Mammary epithelial cell (primary cell): ENCODE measurements at regions of chr20 and their contacts with region 1.

Region 1: GRCh38 chr20:6265204-6265904 is 142.5 kb upstream of the FERMT1 start:
- DNase-seq: peak; percentile 41
- H3K4me3 ChIP-seq: peak overlapping the region in 2 of 3 experiments; percentile 17 to 35
- H3K27ac ChIP-seq: peak overlapping the region; percentile 10
- H3K4me1 ChIP-seq: peaks cover 9% of the 10 kb centered on the region
- H3K27me3 ChIP-seq: no peaks in the 10 kb centered on the region
- CTCF ChIP-seq: peak; percentile 65 to 70

Region 2: GRCh38 chr20:6142348-6142993 is 122.9 kb before region 1 on chr20:
- CTCF ChIA-PET with region 1: no interaction called
- dilution Hi-C with region 1: no loop called
- in situ Hi-C with region 1: no loop called
- intact Hi-C with region 1: loop called (anchors 10 kb)
- DNase-seq: peak; percentile 36
- H3K4me3 ChIP-seq: no peak overlapping the region
- H3K27ac ChIP-seq: no peak overlapping the region
- H3K4me1 ChIP-seq: no peaks in the 10 kb centered on the region
- H3K27me3 ChIP-seq: no peaks in the 10 kb centered on the region
- CTCF ChIP-seq: peak; percentile 76 to 88

Region 3: GRCh38 chr20:6238421-6238820 is 26.9 kb before region 1 on chr20:
- CTCF ChIA-PET with region 1: no interaction called
- dilution Hi-C with region 1: no loop called
- in situ Hi-C with region 1: no loop called
- intact Hi-C with region 1: no loop called
- DNase-seq: no peak
- H3K4me3 ChIP-seq: no peak overlapping the region
- H3K27ac ChIP-seq: no peak overlapping the region
- H3K4me1 ChIP-seq: no peaks in the 10 kb centered on the region
- H3K27me3 ChIP-seq: no peaks in the 10 kb centered on the region
- CTCF ChIP-seq: no peak

Region 4: GRCh38 chr20:6295127-6295866 is 29.9 kb after region 1 on chr20:
- CTCF ChIA-PET with region 1: no interaction called
- dilution Hi-C with region 1: no loop called
- in situ Hi-C with region 1: no loop called
- intact Hi-C with region 1: no loop called
- DNase-seq: no peak
- H3K4me3 ChIP-seq: no peak overlapping the region
- H3K27ac ChIP-seq: no peak overlapping the region
- H3K4me1 ChIP-seq: peaks cover 11% of the 10 kb centered on the region
- H3K27me3 ChIP-seq: no peaks in the 10 kb centered on the region
- CTCF ChIP-seq: no peak

Region 5: GRCh38 chr20:6381887-6382286 is 116.5 kb after region 1 on chr20:
- CTCF ChIA-PET with region 1: no interaction called
- dilution Hi-C with region 1: no loop called
- in situ Hi-C with region 1: no loop called
- intact Hi-C with region 1: loop called (anchors 5 kb)
- DNase-seq: peak; percentile 8
- H3K4me3 ChIP-seq: no peak overlapping the region
- H3K27ac ChIP-seq: no peak overlapping the region
- H3K4me1 ChIP-seq: no peaks in the 10 kb centered on the region
- H3K27me3 ChIP-seq: no peaks in the 10 kb centered on the region
- CTCF ChIP-seq: peak; percentile 60 to 70

Region 6: GRCh38 chr20:6708010-6708409 is 442.7 kb after region 1 on chr20:
- CTCF ChIA-PET with region 1: interaction called, 17 read pairs
- dilution Hi-C with region 1: no loop called
- in situ Hi-C with region 1: no loop called
- intact Hi-C with region 1: no loop called
- DNase-seq: peak; percentile 84
- H3K4me3 ChIP-seq: no peak overlapping the region
- H3K27ac ChIP-seq: peak overlapping the region; percentile 67
- H3K4me1 ChIP-seq: peaks cover 25% of the 10 kb centered on the region
- H3K27me3 ChIP-seq: no peaks in the 10 kb centered on the region
- CTCF ChIP-seq: no peak

Region 7: DNA sequence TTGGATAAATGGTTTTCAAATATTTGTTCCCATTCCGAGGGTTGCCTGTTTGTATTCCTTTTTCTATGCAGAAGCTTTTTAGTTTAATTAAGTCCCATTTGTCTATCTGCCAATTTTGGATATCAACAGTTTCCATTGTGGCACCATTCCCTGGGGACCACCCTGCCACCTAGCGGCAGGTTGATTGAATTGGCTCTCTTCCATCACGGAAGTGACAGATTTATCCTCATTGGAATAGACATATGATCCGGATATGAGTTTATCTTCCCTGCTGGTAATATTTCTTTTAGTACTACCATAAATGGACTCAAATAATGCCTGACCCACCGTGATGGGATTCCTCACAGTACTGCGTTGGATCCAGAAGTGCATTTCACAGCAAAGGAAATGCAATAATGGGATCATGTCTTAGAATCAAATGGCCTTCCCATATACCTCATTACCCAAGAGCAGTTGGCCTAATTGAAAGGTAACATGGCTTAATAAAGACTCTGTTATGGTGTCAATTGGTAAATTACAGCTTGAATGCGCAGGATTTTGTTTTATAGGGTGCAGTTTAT is 829.2 kb after region 1 on chr20:
- CTCF ChIA-PET with region 1: no interaction called
- dilution Hi-C with region 1: no loop called
- in situ Hi-C with region 1: no loop called
- intact Hi-C with region 1: loop called (anchors 5 kb)
- DNase-seq: peak; percentile 62
- H3K4me3 ChIP-seq: no peak overlapping the region
- H3K27ac ChIP-seq: no peak overlapping the region
- H3K4me1 ChIP-seq: no peaks in the 10 kb centered on the region
- H3K27me3 ChIP-seq: no peaks in the 10 kb centered on the region
- CTCF ChIP-seq: peak; percentile 69 to 77

Region 8: DNA sequence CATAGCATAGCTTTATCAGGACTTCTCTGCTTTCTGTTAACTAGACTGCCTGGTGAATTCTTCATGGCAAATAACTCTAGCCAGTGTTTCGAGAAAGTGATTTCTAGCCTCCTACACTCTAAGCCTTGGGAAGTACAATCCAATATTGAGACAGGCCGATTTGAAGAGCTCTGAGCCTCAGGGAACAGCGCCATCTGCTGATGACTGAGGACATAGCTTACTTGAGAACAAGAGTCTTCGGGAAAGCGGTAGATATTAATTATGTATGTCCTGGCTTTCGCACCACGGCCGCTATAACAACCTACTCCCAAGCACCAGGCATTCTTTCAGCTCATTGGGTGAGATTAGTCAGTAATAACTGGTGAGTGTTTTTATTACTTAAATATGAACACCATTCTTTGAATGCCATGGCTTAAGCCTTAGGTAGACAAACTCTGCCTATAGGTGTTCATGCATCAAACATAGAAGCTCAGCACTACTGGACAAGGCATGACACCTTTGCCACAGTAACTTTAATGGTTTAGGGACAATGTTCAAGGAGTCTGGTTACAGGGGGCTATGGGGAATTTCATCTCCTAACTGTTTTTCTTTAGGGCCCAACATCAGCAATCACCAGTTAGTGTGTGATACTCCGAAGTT is 1020.7 kb after region 1 on chr20:
- CTCF ChIA-PET with region 1: no interaction called
- dilution Hi-C with region 1: no loop called
- in situ Hi-C with region 1: no loop called
- intact Hi-C with region 1: loop called (anchors 10 kb)
- DNase-seq: peak; percentile 71
- H3K4me3 ChIP-seq: no peak overlapping the region
- H3K27ac ChIP-seq: no peak overlapping the region
- H3K4me1 ChIP-seq: no peaks in the 10 kb centered on the region
- H3K27me3 ChIP-seq: no peaks in the 10 kb centered on the region
- CTCF ChIP-seq: peak; percentile 92 to 93